Activated CD8-positive, alpha-beta T cell treated with anti-CD3 and anti-CD28 coated beads for 36 hours (primary cell): ENCODE measurements at regions of chr2 and their contacts with region 1.

Region 1: DNA sequence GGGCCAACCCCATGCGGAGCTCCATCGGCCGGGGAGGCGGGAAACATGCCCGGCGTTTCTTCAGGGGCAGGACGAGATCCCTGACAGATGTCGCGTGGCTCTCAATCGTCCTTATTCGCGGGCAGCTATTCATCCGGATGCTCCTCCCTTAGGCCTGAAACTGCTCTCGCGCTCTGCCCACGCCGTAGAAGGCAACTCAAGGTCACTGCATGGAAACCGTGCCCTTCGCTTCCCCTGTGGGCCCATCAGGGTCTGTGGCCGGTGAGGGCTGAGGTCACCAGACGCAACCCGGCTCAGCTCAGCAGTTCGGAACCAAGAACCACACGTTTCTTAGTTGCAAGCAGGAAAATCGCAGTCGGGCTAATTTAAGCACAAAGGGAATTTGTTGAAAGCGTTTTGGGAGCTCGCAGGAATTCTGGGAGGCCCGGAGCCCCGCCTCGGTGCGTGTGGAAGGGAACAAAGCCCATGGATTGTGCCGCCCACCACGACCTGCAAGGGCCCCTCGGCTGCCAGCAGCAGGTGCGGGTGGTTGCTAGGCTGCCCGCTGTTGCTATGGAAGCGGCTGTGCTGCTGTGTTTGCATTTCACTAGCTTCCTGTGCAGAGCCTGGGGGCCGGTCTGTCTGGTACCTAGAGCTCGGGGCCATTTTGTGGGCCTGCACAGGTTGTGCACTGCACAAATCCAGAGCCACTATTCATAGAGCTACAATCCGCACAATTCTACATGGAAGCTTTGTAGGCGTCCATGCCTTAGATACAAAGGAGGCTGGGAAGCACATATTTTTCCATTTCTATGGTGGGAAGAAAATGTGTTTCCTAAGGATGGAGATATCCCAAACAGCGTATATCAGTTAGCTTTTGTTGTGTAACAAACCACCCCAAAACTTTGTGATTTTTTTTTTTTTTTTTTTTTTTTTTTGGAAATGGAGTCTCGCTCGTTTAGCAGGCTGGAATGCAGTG is 6.0 kb upstream of the ALLC start:
- DNase-seq: peak; percentile 90
- ATAC-seq: peak; percentile 79
- H3K4me3 Mint-ChIP-seq: peak overlapping the region; percentile 76
- H3K27ac Mint-ChIP-seq: peak overlapping the region; percentile 94
- H3K4me1 Mint-ChIP-seq: peaks cover 13% of the 10 kb centered on the region
- H3K27me3 Mint-ChIP-seq: no peaks in the 10 kb centered on the region
- CTCF ChIP-seq: no peak

Region 2: DNA sequence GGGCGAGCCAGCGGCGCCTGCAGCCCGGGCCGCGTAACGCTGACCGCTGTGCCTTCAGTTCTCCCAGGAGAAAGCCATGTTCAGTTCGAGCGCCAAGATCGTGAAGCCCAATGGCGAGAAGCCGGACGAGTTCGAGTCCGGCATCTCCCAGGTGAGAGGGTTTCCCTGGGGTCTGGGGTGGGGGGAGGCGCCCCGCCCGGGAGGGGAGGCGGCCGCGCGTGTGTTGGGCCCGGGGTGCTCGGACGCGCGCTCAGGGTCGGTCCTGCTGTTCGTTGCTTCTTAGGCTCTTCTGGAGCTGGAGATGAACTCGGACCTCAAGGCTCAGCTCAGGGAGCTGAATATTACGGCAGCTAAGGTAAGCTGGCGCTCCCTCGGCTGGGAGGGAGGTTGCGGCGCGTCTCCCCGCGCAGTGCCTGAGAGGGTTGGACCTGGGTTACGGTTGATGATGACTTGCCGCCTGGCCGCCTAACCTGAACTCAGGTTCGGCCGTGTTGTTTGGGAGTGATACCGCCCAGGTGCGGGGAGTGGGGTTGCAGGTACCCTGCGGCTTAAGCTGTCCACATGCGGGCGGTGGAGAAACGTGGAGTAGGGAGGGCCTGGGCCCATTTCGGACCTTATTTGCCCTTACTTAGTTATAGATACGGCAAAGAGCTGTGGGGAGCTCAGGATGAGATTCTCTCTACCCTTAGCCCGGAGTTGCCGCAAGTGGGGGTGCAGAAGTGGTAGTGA is 76.3 kb before region 1 on chr2:
- CTCF ChIA-PET with region 1: interaction called, 9 read pairs
- POLR2A ChIA-PET with region 1: interaction called, 4 read pairs
- intact Hi-C with region 1: loop called (anchors 5 kb)
- DNase-seq: peak; percentile 25
- ATAC-seq: peak; percentile 6
- H3K4me3 Mint-ChIP-seq: peak overlapping the region; percentile 97
- H3K27ac Mint-ChIP-seq: peak overlapping the region; percentile 97
- H3K4me1 Mint-ChIP-seq: peaks cover 40% of the 10 kb centered on the region
- H3K27me3 Mint-ChIP-seq: no peaks in the 10 kb centered on the region
- CTCF ChIP-seq: no peak

Region 3: GRCh38 chr2:3641841-3642421 is 10.0 kb before region 1 on chr2:
- CTCF ChIA-PET with region 1: interaction called, 13 read pairs
- POLR2A ChIA-PET with region 1: interaction called, 3 read pairs
- intact Hi-C with region 1: no loop called
- DNase-seq: no peak
- ATAC-seq: no peak
- H3K4me3 Mint-ChIP-seq: no peak overlapping the region
- H3K27ac Mint-ChIP-seq: no peak overlapping the region
- H3K4me1 Mint-ChIP-seq: no peaks in the 10 kb centered on the region
- H3K27me3 Mint-ChIP-seq: no peaks in the 10 kb centered on the region
- CTCF ChIP-seq: no peak

Region 4: DNA sequence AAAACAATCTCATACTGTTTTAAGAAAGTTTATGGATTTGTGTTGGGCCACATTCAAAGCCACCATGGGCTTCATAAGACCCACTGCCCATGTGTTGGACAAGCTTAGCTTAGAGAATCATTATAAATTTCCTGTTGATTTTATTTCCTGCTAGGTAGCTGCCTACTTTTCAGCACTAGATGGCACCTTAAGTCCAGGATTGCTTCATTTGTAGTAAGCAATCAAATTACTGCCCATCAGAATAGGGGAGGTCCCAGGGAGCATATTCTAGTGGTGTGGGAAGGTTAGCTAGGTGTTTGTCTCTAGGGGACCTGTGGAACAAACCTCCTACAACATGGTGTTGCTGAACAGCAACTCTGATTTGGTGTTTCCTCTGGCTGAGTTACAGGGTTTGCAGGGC is 40.4 kb after region 1 on chr2:
- CTCF ChIA-PET with region 1: no interaction called
- POLR2A ChIA-PET with region 1: no interaction called
- intact Hi-C with region 1: no loop called
- DNase-seq: no peak
- ATAC-seq: no peak
- H3K4me3 Mint-ChIP-seq: no peak overlapping the region
- H3K27ac Mint-ChIP-seq: no peak overlapping the region
- H3K4me1 Mint-ChIP-seq: no peaks in the 10 kb centered on the region
- H3K27me3 Mint-ChIP-seq: peaks cover 2% of the 10 kb centered on the region
- CTCF ChIP-seq: peak; percentile 19